Astrocyte of the cerebellum (primary cell): ENCODE measurements at regions of chr22 and their contacts with region 1.

Region 1: GRCh38 chr22:35430897-35431322 is 31.0 kb downstream of the MCM5 start:
- DNase-seq: peak; percentile 66
- H3K4me3 ChIP-seq: no peak overlapping the region
- CTCF ChIP-seq: peak; percentile 97

Region 2: GRCh38 chr22:35582861-35583670 is 152.2 kb after region 1 on chr22:
- in situ Hi-C with region 1: loop called (anchors 25 kb)
- DNase-seq: peak; percentile 43
- H3K4me3 ChIP-seq: no peak overlapping the region
- CTCF ChIP-seq: peak; percentile 92